ENCODE measurements at regions of chr16 and their contacts with region 1.

Region 1: DNA sequence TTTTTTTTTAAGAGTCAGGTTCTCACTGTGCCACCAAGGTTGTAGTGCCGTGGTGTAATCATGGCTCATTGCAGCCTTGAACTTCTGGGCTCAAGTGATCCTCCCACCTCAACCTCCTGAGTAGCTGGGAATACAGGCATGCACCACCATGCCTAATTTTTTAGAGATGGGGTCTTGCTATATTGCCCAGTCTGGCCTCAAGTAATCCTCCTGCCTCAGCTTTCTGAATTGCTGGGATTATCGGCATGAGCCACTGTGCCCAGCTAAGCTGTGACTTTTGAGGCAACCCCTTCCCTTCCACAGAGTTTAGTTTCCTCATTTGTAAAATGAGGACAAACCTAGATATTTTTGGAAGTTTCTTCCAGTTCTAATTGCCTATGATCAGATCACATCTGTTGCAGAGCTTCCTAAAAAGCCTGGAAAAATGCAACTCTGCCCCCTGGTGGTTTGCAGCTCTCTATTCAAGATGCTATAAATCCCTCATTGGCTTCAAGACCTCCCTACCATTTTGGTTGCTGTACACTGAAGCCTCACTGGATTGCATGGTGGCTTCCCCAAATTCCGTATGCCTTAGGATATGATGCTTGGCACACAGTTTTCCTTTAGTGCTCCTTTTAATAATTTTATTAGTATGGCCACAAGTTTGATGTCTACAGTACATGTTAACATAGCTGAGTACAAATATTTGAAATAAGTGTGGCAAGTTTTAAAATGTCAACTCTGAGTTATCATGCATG is 19.3 kb downstream of the GDE1 start:
- DNase-seq: peak; percentile 48 to 89
- H3K4me3 ChIP-seq: no peak overlapping the region
- CTCF ChIP-seq: no peak
- POLR2A ChIP-seq: no peak

Region 2: DNA sequence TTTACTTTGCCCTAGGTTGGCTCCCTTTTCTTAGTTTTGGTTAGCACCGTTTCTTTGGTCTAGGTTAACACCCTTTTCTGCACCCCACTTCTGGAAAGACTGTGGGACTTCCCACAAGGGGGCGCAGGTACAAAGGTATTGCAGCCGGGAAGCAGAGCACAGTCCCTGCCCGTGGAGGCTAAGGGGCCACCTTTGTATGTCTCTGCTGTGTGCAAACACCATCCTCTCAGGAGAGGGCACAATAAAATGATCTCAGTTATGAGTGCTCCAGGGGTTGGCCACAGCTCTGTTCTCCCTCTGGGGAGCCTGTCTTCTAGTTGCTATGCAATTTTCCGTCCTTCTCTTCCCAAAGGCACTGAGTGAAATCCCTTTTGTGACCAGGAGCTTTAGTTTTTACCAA is 113.3 kb before region 1 on chr16:
- intact Hi-C with region 1: loop called (anchors 10 kb)
- DNase-seq: peak in 1 of 2 donors; percentile 28
- H3K4me3 ChIP-seq: no peak overlapping the region
- CTCF ChIP-seq: no peak
- POLR2A ChIP-seq: no peak

Measured in lower leg skin (tissue), 4 donors.